Activated CD4-positive, alpha-beta T cell treated with anti-CD3 and anti-CD28 coated beads for 36 hours (primary cell): ENCODE measurements at regions of chr9 and their contacts with region 1.

Region 1: GRCh38 chr9:124617471-124618141 is 110.4 kb upstream of the NR5A1 start:
- DNase-seq: peak; percentile 88
- ATAC-seq: peak; percentile 87
- H3K4me3 Mint-ChIP-seq: no peak overlapping the region
- H3K27ac Mint-ChIP-seq: no peak overlapping the region
- H3K4me1 Mint-ChIP-seq: no peaks in the 10 kb centered on the region
- H3K27me3 Mint-ChIP-seq: peaks cover 4% of the 10 kb centered on the region

Region 2: DNA sequence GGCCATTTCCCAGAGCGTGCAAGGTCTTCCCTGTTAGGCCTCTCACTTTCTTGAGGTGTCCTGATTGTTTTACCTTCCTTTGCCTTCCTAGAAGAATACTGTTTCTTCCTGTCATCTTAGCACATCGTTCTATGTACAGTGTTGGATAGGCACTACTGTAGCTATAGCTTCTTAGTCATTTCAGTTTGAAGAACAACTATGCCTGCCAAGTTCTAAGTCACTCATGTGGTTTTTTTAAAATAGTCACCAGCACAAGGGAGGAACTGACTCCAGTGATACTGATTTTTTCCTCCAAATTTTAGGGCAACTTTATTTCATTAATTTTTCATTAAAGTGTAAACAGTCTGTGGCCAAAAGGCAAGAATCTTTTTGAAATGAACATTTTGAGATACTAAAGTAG is 12.0 kb after region 1 on chr9:
- CTCF ChIA-PET with region 1: interaction called, 15 read pairs
- POLR2A ChIA-PET with region 1: no interaction called
- intact Hi-C with region 1: no loop called
- DNase-seq: no peak
- ATAC-seq: no peak
- H3K4me3 Mint-ChIP-seq: no peak overlapping the region
- H3K27ac Mint-ChIP-seq: no peak overlapping the region
- H3K4me1 Mint-ChIP-seq: no peaks in the 10 kb centered on the region
- H3K27me3 Mint-ChIP-seq: no peaks in the 10 kb centered on the region

Region 3: GRCh38 chr9:124658165-124659017 is 40.8 kb after region 1 on chr9:
- CTCF ChIA-PET with region 1: interaction called, 15 read pairs
- POLR2A ChIA-PET with region 1: no interaction called
- intact Hi-C with region 1: no loop called
- DNase-seq: peak; percentile 73
- ATAC-seq: peak; percentile 97
- H3K4me3 Mint-ChIP-seq: peak overlapping the region; percentile 95
- H3K27ac Mint-ChIP-seq: peak overlapping the region; percentile 97
- H3K4me1 Mint-ChIP-seq: peaks cover 15% of the 10 kb centered on the region
- H3K27me3 Mint-ChIP-seq: peaks cover 2% of the 10 kb centered on the region

Region 4: DNA sequence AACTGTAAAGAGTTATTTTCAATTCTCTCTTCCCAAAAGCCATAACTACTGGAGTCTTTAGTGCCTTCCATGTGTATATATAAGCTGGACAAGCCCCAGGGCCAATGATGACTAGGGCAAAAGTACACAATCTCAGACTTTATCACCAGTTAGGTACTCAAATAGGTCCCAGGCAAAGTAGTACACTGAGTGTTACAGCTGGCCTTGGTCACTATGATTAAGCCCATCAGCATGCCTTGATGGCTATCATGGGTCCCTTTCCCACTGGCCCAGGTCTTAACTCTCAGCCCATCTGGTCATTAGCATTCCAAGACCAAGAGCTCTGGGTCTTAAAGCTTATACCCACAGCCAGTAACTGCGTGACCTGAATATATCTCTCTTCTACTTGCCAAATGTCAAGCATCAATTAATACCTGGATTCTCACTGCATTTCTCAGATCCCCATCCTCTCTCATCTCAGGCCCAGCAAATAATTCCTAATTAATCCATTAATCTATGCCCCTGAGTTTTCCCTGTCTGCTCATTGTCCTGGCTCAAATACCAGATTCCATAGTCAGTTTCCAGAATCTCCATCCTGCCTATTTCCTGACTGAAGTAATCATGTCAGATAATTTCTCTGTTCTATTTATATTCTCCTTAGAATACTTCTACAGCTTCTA is 91.2 kb after region 1 on chr9:
- CTCF ChIA-PET with region 1: interaction called, 94 read pairs
- POLR2A ChIA-PET with region 1: no interaction called
- intact Hi-C with region 1: loop called (anchors 1 kb)
- DNase-seq: no peak
- ATAC-seq: no peak
- H3K4me3 Mint-ChIP-seq: no peak overlapping the region
- H3K27ac Mint-ChIP-seq: no peak overlapping the region
- H3K4me1 Mint-ChIP-seq: no peaks in the 10 kb centered on the region
- H3K27me3 Mint-ChIP-seq: peaks cover 14% of the 10 kb centered on the region

Region 5: GRCh38 chr9:124852829-124853531 is 235.4 kb after region 1 on chr9 and contains the start of gene WDR38:
- CTCF ChIA-PET with region 1: interaction called, 3 read pairs
- POLR2A ChIA-PET with region 1: no interaction called
- intact Hi-C with region 1: loop called in 1 of 2 experiments (anchors 5 kb)
- DNase-seq: peak; percentile 85
- ATAC-seq: peak; percentile 88
- H3K4me3 Mint-ChIP-seq: peak within 1 kb of the TSS; percentile 46
- H3K27ac Mint-ChIP-seq: no peak within 1 kb of the TSS
- H3K4me1 Mint-ChIP-seq: peaks cover 16% of the 10 kb centered on the region
- H3K27me3 Mint-ChIP-seq: peaks cover 10% of the 10 kb centered on the region
- total RNA-seq, gene WDR38: not detected